GM10248 (cell line): ENCODE measurements at regions of chr19 and their contacts with region 1.

Region 1: DNA sequence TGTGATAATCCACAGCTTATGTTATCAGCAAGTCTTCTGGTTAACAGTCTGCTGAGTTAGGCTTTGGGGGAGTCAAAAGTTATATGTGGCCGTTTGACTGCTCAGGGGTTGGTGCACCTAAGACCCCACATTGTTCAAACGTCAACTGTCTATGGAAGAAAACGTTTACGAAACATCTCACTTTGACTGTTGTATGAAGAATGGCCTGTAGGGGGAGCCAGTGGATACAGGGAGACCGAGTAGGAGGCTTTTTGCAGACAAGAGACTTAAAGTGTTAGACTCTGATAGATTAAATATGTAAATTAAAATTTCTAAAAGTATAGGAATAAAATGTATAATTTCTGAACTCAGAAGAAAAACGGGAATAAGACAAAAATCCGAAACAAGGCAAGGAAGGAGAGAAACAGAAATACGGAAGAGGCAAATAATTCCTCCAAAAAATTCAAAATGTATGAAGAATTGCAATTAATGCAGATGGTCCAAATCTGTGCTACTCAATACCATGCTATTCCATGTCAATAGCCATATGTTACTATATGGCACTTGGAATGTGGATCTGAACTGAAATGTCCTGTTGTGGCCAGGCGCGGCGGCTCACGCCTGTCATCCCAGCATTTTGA is 37.8 kb downstream of the TNFSF14 start:
- DNase-seq: peak; percentile 69
- CTCF ChIP-seq: peak; percentile 81

Region 2: GRCh38 chr19:6318772-6319171 is 313.3 kb before region 1 on chr19:
- CTCF ChIA-PET with region 1: no interaction called
- POLR2A ChIA-PET with region 1: no interaction called
- DNase-seq: no peak
- CTCF ChIP-seq: no peak

Region 3: DNA sequence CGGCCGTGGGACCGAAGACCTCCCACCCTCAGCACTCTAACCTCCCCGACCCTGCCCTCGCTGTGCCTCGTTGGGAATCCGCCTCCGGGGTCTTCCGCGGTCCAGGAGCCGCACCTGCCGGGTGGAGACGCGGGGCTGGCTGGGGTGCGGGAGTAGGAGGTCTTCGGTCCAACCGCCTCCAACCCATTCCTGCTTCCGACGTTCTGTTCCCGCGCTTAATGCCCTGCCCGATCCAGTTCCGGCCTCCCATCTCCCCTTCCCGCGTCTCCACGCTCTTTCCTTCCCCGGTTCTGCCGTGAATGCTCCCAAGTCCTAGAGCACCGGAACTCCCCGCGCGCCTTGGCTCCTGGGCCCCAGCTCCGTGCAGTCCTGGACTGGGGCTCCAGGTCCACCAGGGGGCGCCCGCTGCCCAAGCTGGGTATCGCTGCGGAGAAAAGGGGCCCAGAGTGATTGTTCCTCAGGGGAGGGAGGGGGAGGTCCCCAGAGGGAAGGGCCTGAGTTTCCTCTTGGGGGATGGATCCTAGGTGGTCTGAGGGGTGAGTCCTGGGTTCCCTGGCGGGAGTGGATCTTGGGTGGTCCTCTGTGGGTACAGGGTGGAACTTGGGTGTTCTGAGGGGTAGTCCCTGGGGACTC is 115.3 kb before region 1 on chr19:
- CTCF ChIA-PET with region 1: interaction called, 40 read pairs
- POLR2A ChIA-PET with region 1: no interaction called
- DNase-seq: peak; percentile 85
- CTCF ChIP-seq: peak; percentile 98

Region 4: DNA sequence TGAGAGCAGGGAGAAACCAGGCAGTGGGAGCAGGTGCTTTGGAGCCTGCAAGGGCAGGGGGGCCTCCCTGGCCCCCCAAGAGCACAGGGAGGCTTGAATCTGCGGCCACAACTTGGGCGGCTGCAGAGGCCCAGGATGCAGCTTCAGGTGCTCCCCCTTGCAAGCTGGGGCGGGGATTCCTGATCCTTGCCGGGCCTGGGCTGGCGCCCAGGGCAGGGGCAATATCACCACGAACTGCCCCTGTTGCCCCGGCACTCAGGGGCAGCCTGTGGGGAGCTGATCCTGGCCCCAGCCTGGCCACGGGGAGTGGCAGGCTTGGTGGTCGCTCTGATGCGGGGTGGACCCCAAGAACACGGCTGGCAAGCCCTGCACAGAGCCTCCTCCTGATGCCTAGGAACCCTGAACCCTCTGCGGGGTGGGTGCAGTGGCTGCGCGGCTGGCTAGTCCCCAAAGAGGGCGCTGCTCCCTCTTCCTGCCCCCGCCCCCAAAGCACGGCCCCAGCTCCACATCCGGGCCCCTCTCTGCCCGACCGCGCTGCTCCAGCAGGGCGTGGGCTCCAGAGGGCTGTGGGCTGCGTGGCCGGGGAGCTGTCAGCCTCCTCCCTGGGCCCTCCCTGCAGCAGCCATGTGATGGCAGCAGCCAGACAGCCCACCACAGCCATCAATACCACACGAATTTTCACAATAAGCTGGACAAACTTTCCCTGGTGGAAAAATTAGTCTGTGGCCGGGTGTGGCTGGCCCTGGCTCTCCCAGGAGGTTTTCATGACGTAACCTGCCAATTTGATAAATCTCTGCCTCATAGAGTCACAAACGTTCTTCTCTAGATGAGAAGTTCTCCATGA is 80.3 kb before region 1 on chr19:
- CTCF ChIA-PET with region 1: interaction called, 11 read pairs
- POLR2A ChIA-PET with region 1: no interaction called
- DNase-seq: peak; percentile 86
- CTCF ChIP-seq: peak; percentile 40

Region 5: DNA sequence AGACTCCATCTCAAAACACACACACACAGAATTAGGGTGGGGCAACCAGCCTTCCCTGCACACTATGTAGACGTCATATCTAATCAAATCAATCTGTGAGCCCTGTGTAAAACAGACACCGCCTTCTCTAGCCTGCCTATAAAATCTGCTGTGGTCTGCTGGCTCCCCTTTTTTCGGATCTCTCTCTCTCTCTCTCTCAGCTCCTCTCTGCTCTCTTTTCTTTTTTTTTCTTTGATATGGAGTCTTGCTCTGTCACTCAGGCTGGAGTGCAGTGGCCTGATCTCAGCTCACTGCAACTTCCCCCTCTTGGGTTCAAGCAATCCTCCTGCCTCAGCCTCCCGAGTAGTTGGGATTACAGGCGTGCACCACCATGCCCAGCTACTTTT is 29.4 kb before region 1 on chr19:
- CTCF ChIA-PET with region 1: interaction called, 10 read pairs
- POLR2A ChIA-PET with region 1: no interaction called
- DNase-seq: no peak
- CTCF ChIP-seq: no peak

Region 6: GRCh38 chr19:6651965-6652804 is 20.1 kb after region 1 on chr19:
- CTCF ChIA-PET with region 1: interaction called, 10 read pairs
- POLR2A ChIA-PET with region 1: no interaction called
- DNase-seq: no peak
- CTCF ChIP-seq: no peak

Region 7: DNA sequence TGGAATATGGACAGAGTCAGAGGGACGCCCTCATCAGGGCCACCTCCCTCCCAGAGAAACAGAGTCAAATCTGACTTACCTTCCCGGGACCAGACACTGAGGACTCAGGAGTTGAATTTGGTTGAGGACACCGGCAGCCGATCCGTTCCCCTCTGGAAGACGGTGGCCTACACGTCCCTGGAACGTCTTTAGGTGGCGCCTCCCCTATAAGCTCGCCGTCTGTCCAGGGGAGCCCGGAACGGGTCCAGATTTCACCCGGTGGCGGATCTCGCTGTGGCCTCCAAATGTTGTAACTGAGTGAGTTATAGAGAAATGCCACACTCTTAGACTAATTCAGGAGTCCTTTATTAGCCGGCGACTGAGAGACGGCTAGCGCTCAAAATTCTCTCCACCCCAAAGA is 28.8 kb after region 1 on chr19:
- CTCF ChIA-PET with region 1: interaction called, 12 read pairs
- POLR2A ChIA-PET with region 1: no interaction called
- DNase-seq: no peak
- CTCF ChIP-seq: no peak